Activated naive CD4-positive, alpha-beta T cell treated with anti-CD3 and anti-CD28 coated beads, Interleukin-2, amount 10 ng/mL, durations not matched to agents 7 days and 5 days (primary cell): ENCODE measurements at regions of chr9 and their contacts with region 1.

Region 1: GRCh38 chr9:121545875-121546423 is 46.3 kb upstream of the GGTA1 start:
- DNase-seq: peak; percentile 79
- H3K4me3 Mint-ChIP-seq: no peak overlapping the region
- H3K27ac Mint-ChIP-seq: no peak overlapping the region
- H3K4me1 Mint-ChIP-seq: peaks cover under 1% of the 10 kb centered on the region
- H3K27me3 Mint-ChIP-seq: peaks cover 56% of the 10 kb centered on the region

Region 2: GRCh38 chr9:121557581-121558447 is 11.9 kb after region 1 on chr9:
- CTCF ChIA-PET with region 1: interaction called, 11 read pairs
- DNase-seq: peak; percentile 37
- H3K4me3 Mint-ChIP-seq: no peak overlapping the region
- H3K27ac Mint-ChIP-seq: no peak overlapping the region
- H3K4me1 Mint-ChIP-seq: peaks cover 5% of the 10 kb centered on the region
- H3K27me3 Mint-ChIP-seq: peaks cover 48% of the 10 kb centered on the region

Region 3: DNA sequence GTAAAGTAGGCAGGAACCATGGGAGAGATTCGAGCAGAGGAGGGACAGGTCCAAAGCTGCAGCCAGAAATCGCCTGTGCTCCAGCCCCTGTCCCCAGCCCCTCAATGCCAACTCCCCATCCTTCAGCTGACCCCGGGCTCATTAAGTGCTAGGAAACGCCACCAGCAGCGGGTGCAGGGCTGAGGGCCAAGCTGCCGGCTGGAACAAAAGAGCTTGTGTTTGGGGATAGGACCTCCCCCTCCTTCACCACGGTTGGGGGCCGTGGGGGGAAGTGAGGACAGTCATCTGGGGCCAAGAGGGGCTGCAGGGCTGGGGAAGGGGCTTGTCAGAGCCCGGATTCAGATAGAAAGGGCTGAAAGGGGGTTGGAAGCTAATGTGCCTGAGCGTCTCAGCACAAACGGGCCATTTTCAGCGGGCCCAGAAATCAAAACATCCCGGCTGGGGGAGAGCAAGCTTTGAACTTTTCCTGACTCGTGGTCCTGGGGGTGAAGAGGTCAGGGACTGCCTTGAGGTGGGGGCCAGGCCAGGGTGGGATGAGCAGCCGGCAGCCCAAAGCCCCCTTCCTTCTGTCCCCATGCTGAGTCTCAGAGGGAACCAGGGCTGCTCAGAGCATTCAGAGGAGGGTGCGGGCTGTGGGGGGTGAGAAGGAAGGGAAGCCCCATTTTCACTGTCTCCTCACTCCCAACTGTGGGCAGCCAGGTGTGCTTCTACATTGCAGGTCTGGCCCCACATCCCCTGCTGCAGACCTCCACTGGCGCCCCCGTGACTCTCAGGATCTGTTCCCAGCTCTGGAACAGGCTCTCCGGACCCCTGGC is 36.0 kb after region 1 on chr9:
- CTCF ChIA-PET with region 1: interaction called, 10 read pairs
- DNase-seq: no peak
- H3K4me3 Mint-ChIP-seq: no peak overlapping the region
- H3K27ac Mint-ChIP-seq: no peak overlapping the region
- H3K4me1 Mint-ChIP-seq: no peaks in the 10 kb centered on the region
- H3K27me3 Mint-ChIP-seq: peaks cover 17% of the 10 kb centered on the region

Region 4: GRCh38 chr9:121686930-121687541 is 141.1 kb after region 1 on chr9:
- CTCF ChIA-PET with region 1: interaction called, 89 read pairs
- DNase-seq: peak; percentile 83
- H3K4me3 Mint-ChIP-seq: no peak overlapping the region
- H3K27ac Mint-ChIP-seq: no peak overlapping the region
- H3K4me1 Mint-ChIP-seq: no peaks in the 10 kb centered on the region
- H3K27me3 Mint-ChIP-seq: peaks cover 42% of the 10 kb centered on the region